Heart left ventricle (tissue), 16 donors: ENCODE measurements at regions of chr5 and their contacts with region 1.

Region 1: DNA sequence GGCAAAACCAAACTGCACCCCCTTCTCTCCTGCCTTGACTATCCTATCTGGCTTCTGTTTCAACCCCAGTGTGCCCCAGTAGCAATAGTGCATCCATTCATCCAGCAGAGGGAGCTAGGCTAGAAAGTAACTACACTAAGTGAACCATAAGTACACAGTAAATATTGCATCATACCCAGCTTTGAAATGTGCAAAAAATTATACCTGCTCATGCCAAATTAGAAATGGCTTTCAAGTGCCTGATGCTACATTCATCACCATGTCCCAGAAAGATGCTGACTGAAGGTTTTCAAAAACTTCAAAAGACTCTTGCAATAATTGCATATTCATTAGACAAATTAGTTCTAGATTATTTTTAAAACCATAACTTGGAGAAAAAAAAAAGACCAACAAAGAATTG is 153.5 kb downstream of the PRELID2 start:
- DNase-seq: peak in 4 of 5 donors; percentile 24 to 43 (median 26)
- ATAC-seq: peak; percentile 70 to 93 (median 83)
- H3K4me3 ChIP-seq: no peak overlapping the region
- H3K27ac ChIP-seq: peak overlapping the region in 1 of 12 donors; percentile 73
- H3K4me1 ChIP-seq: peaks cover 0 to 22% (median 4%) of the 10 kb centered on the region in 12 donors
- H3K27me3 ChIP-seq: no peaks in the 10 kb centered on the region
- CTCF ChIP-seq: peak; percentile 38 to 74 (median 61)
- POLR2A ChIP-seq: no peak

Region 2: DNA sequence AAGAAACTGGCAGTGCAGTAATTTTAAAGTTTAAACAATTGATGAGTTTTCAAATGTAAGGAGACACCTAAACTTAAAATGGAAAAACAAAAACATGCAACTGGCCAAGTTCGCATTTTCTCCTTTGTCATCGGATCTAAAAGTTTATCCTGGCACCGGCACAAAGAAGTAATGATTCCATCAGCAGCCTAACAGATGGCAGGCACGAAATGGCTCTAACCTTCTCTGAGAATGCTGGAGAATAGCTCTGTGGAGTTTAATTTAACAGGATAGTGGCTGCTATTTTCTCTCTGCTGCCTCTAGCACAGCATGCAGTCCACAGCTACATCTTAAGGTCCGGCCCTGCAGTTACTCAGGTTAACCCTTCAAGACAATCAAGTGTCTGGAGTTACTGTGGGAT is 71.3 kb after region 1 on chr5:
- intact Hi-C with region 1: no loop called
- DNase-seq: no peak
- ATAC-seq: no peak
- H3K4me3 ChIP-seq: no peak overlapping the region
- H3K27ac ChIP-seq: no peak overlapping the region
- H3K4me1 ChIP-seq: peaks cover 0 to 13% (median 0%) of the 10 kb centered on the region in 12 donors
- H3K27me3 ChIP-seq: no peaks in the 10 kb centered on the region
- CTCF ChIP-seq: no peak
- POLR2A ChIP-seq: no peak

Region 3: GRCh38 chr5:145825751-145826180 is 144.1 kb after region 1 on chr5:
- intact Hi-C with region 1: loop called in 8 of 10 experiments (anchors 5 to 10 kb)
- DNase-seq: no peak
- ATAC-seq: peak in 1 of 4 donors; percentile 50
- H3K4me3 ChIP-seq: no peak overlapping the region
- H3K27ac ChIP-seq: no peak overlapping the region
- H3K4me1 ChIP-seq: peaks cover 0 to 8% (median 5%) of the 10 kb centered on the region in 12 donors
- H3K27me3 ChIP-seq: no peaks in the 10 kb centered on the region
- CTCF ChIP-seq: peak; percentile 53 to 87 (median 69)
- POLR2A ChIP-seq: no peak

Region 4: GRCh38 chr5:145887976-145888574 is 206.4 kb after region 1 on chr5:
- intact Hi-C with region 1: loop called in 1 of 10 experiments (anchors 5 kb)
- DNase-seq: no peak
- ATAC-seq: peak in 2 of 4 donors; percentile 70 to 73
- H3K4me3 ChIP-seq: no peak overlapping the region
- H3K27ac ChIP-seq: no peak overlapping the region
- H3K4me1 ChIP-seq: no peaks in the 10 kb centered on the region
- H3K27me3 ChIP-seq: peaks cover 0 to 5% (median 0%) of the 10 kb centered on the region in 9 donors
- CTCF ChIP-seq: peak; percentile 13 to 61 (median 46)
- POLR2A ChIP-seq: no peak

Region 5: GRCh38 chr5:146049014-146049703 is 367.5 kb after region 1 on chr5:
- intact Hi-C with region 1: loop called (anchors 5 to 10 kb)
- DNase-seq: peak in 3 of 5 donors; percentile 27 to 36 (median 32)
- ATAC-seq: peak in 3 of 4 donors; percentile 62 to 70 (median 69)
- H3K4me3 ChIP-seq: no peak overlapping the region
- H3K27ac ChIP-seq: no peak overlapping the region
- H3K4me1 ChIP-seq: peaks cover 0 to 7% (median 0%) of the 10 kb centered on the region in 12 donors
- H3K27me3 ChIP-seq: no peaks in the 10 kb centered on the region
- CTCF ChIP-seq: peak; percentile 46 to 76 (median 69)
- POLR2A ChIP-seq: no peak